Psoas muscle (tissue), 8 donors: ENCODE measurements at regions of chr1 and their contacts with region 1.

Region 1: GRCh38 chr1:182889997-182890396 is 50.9 kb downstream of the DHX9 start:
- DNase-seq: no peak
- ATAC-seq: peak in 2 of 4 donors; percentile 22 to 27
- H3K4me3 ChIP-seq: no peak overlapping the region
- H3K27ac ChIP-seq: no peak overlapping the region
- H3K4me1 ChIP-seq: no peaks in the 10 kb centered on the region
- H3K27me3 ChIP-seq: no peaks in the 10 kb centered on the region
- CTCF ChIP-seq: no peak

Region 2: GRCh38 chr1:182015360-182015759 is 874.6 kb before region 1 on chr1:
- intact Hi-C with region 1: no loop called
- DNase-seq: no peak
- ATAC-seq: no peak
- H3K4me3 ChIP-seq: no peak overlapping the region
- H3K27ac ChIP-seq: no peak overlapping the region
- H3K4me1 ChIP-seq: no peaks in the 10 kb centered on the region
- H3K27me3 ChIP-seq: no peaks in the 10 kb centered on the region
- CTCF ChIP-seq: no peak

Region 3: GRCh38 chr1:182851825-182852224 is 38.2 kb before region 1 on chr1:
- intact Hi-C with region 1: loop called in 1 of 2 experiments (anchors 5 kb)
- DNase-seq: no peak
- ATAC-seq: no peak
- H3K4me3 ChIP-seq: no peak overlapping the region
- H3K27ac ChIP-seq: no peak overlapping the region
- H3K4me1 ChIP-seq: no peaks in the 10 kb centered on the region
- H3K27me3 ChIP-seq: no peaks in the 10 kb centered on the region
- CTCF ChIP-seq: no peak

Region 4: GRCh38 chr1:183124259-183124658 is 234.3 kb after region 1 on chr1:
- intact Hi-C with region 1: loop called in 1 of 2 experiments (anchors 10 kb)
- DNase-seq: no peak
- ATAC-seq: peak in 2 of 4 donors; percentile 34 to 49
- H3K4me3 ChIP-seq: no peak overlapping the region
- H3K27ac ChIP-seq: no peak overlapping the region
- H3K4me1 ChIP-seq: no peaks in the 10 kb centered on the region
- H3K27me3 ChIP-seq: no peaks in the 10 kb centered on the region
- CTCF ChIP-seq: no peak